ENCODE measurements at regions of chr5 and their contacts with region 1.

Region 1: DNA sequence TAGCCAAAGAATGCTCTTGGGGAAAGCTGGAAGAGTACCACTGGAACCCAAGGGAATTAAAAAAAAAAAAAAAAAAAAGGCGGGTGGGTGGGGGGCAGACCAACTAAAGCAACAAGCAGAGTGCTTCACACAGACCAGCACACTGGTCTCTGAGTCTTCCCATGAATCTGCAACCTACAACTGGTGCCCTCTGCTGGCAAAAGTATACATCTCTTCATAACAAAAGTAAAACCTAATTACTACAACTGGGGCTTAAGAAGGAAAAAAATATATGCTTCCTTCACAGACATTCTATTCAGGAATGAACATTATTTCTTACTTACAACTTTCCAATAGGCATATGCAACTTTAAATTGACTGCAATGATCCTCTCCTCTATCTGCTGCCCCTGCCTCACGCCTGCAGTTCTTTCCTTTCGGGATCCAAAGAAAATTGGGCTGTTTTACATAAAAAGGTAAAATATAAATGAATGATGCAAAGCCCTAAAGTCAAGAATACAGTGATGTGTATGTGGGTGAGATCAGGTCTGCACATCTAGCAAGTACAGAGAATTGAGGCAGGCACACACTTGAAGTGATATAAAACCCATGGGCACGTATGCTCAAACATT is 7.2 kb upstream of the KLHL3 start:
- DNase-seq: no peak
- ATAC-seq: peak; percentile 90
- H3K4me3 ChIP-seq: no peak overlapping the region
- H3K27ac ChIP-seq: no peak overlapping the region
- H3K4me1 ChIP-seq: no peaks in the 10 kb centered on the region
- H3K27me3 ChIP-seq: no peaks in the 10 kb centered on the region
- CTCF ChIP-seq: peak; percentile 79

Region 2: GRCh38 chr5:137629646-137630045 is 113.5 kb before region 1 on chr5:
- CTCF ChIA-PET with region 1: interaction called, 27 read pairs
- POLR2A ChIA-PET with region 1: no interaction called
- in situ Hi-C with region 1: no loop called
- intact Hi-C with region 1: loop called (anchors 1 kb)
- DNase-seq: peak; percentile 25
- ATAC-seq: peak; percentile 83
- H3K4me3 ChIP-seq: no peak overlapping the region
- H3K27ac ChIP-seq: no peak overlapping the region
- H3K4me1 ChIP-seq: no peaks in the 10 kb centered on the region; the same call in 1 of the 2 replicates
- H3K27me3 ChIP-seq: no peaks in the 10 kb centered on the region
- CTCF ChIP-seq: peak; percentile 85

Region 3: GRCh38 chr5:137660349-137660817 is 82.8 kb before region 1 on chr5:
- CTCF ChIA-PET with region 1: interaction called, 29 read pairs
- POLR2A ChIA-PET with region 1: no interaction called
- in situ Hi-C with region 1: no loop called
- intact Hi-C with region 1: loop called (anchors 1 kb)
- DNase-seq: peak; percentile 66
- ATAC-seq: peak; percentile 99
- H3K4me3 ChIP-seq: no peak overlapping the region
- H3K27ac ChIP-seq: no peak overlapping the region
- H3K4me1 ChIP-seq: no peaks in the 10 kb centered on the region
- H3K27me3 ChIP-seq: no peaks in the 10 kb centered on the region
- CTCF ChIP-seq: peak; percentile 86

Region 4: GRCh38 chr5:137754126-137754960 is 11.2 kb after region 1 on chr5 and contains the start of gene HNRNPA0:
- CTCF ChIA-PET with region 1: interaction called, 10 read pairs
- POLR2A ChIA-PET with region 1: interaction called, 5 read pairs
- in situ Hi-C with region 1: no loop called
- intact Hi-C with region 1: no loop called
- DNase-seq: peak; percentile 88
- ATAC-seq: peak; percentile 95
- H3K4me3 ChIP-seq: peak within 1 kb of the TSS; percentile 93 to 98
- H3K27ac ChIP-seq: peak within 1 kb of the TSS; percentile 98
- H3K4me1 ChIP-seq: peaks cover 13% of the 10 kb centered on the region
- H3K27me3 ChIP-seq: no peaks in the 10 kb centered on the region
- CTCF ChIP-seq: no peak
- total RNA-seq, gene HNRNPA0: 33.3 TPM

Region 5: DNA sequence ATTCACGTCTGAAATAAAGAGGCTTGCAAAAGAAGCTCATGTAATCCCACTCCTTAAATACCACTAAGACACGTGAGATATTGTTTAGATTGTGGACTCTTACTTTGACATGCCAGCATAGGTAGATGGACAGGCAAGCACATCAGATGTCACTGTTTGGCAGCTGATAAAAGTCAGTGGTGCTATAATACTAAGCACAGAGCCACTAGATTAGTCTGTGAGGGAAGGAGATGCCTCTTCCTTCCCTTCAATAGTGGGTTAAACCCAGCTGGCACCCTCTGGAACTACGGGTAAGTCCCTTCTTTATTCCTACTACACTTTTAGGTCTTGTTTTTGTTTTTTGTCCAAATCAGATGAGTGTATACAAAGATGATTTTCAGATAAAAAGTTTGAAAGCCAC is 124.5 kb after region 1 on chr5 and contains the start of gene MYOT:
- CTCF ChIA-PET with region 1: no interaction called
- POLR2A ChIA-PET with region 1: no interaction called
- in situ Hi-C with region 1: no loop called
- intact Hi-C with region 1: no loop called
- DNase-seq: no peak
- ATAC-seq: no peak
- H3K4me3 ChIP-seq: no peak within 1 kb of the TSS
- H3K27ac ChIP-seq: no peak within 1 kb of the TSS
- H3K4me1 ChIP-seq: no peaks in the 10 kb centered on the region
- H3K27me3 ChIP-seq: no peaks in the 10 kb centered on the region
- CTCF ChIP-seq: no peak
- total RNA-seq, gene MYOT: not detected

Region 6: DNA sequence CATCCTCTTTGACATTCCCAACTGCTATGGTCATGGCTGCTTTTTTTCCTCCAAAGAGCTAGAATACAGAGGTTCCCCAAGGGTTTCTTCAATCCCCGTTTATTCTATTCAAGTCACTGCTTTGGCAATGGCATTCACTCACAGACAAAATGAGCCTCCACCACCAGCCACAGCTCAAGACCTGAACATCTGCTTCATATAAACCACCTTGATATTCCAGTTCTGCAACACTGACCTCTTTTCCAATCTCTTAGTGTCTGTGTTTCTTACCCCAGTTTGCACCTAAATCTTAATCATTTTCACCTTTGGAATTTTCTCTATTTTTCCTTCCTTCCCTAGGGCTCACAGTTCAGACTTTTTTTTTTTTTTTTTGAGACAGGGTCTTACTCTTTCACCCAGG is 235.5 kb after region 1 on chr5:
- CTCF ChIA-PET with region 1: no interaction called
- POLR2A ChIA-PET with region 1: no interaction called
- in situ Hi-C with region 1: no loop called
- intact Hi-C with region 1: no loop called
- DNase-seq: no peak
- ATAC-seq: no peak
- H3K4me3 ChIP-seq: no peak overlapping the region
- H3K27ac ChIP-seq: no peak overlapping the region
- H3K4me1 ChIP-seq: no peaks in the 10 kb centered on the region
- H3K27me3 ChIP-seq: no peaks in the 10 kb centered on the region
- CTCF ChIP-seq: no peak